Activated CD4-positive, alpha-beta memory T cell treated with anti-CD3 and anti-CD28 coated beads for 36 hours (primary cell): ENCODE measurements at regions of chr21 and their contacts with region 1.

Region 1: GRCh38 chr21:25607151-25608043 is at the start of gene MRPL39:
- DNase-seq: peak; percentile 93
- H3K4me3 Mint-ChIP-seq: peak within 1 kb of the TSS; percentile 97
- H3K27ac Mint-ChIP-seq: peak within 1 kb of the TSS; percentile 91
- H3K4me1 Mint-ChIP-seq: peaks cover 41% of the 10 kb centered on the region
- H3K27me3 Mint-ChIP-seq: no peaks in the 10 kb centered on the region
- total RNA-seq, gene MRPL39: 71.7 to 73.6 TPM

Region 2: DNA sequence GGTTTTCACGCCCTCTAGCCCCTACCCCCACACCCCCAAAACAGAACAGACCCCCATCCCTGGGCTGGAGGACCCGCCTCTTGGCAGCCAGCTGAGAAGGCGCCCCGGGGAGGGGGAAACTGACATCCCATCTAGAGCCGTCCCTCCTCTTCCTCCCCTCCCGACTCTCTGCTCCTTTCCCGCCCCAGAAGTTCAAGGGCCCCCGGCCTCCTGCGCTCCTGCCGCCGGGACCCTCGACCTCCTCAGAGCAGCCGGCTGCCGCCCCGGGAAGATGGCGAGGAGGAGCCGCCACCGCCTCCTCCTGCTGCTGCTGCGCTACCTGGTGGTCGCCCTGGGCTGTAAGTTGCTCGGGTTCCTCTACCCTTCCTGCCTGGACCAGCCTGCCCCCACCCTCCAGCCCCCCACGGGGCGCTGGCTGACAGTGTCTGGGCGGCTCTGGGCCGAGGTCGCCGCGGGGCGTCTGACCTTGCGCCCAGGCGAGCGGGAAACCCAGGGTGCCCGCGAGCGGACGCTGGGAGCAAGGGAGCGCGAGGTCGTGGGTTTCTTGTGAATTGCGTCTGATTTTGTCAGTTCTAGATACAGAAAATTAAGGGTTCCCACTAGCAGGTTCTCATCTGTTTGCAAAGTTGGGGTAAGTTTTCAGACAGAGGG is 32.3 kb after region 1 on chr21:
- CTCF ChIA-PET with region 1: interaction called, 23 read pairs
- POLR2A ChIA-PET with region 1: interaction called, 3 read pairs
- intact Hi-C with region 1: loop called (anchors 1 kb)
- DNase-seq: peak; percentile 58
- H3K4me3 Mint-ChIP-seq: peak overlapping the region; percentile 57
- H3K27ac Mint-ChIP-seq: no peak overlapping the region
- H3K4me1 Mint-ChIP-seq: peaks cover 30% of the 10 kb centered on the region
- H3K27me3 Mint-ChIP-seq: peaks cover 25% of the 10 kb centered on the region

Region 3: DNA sequence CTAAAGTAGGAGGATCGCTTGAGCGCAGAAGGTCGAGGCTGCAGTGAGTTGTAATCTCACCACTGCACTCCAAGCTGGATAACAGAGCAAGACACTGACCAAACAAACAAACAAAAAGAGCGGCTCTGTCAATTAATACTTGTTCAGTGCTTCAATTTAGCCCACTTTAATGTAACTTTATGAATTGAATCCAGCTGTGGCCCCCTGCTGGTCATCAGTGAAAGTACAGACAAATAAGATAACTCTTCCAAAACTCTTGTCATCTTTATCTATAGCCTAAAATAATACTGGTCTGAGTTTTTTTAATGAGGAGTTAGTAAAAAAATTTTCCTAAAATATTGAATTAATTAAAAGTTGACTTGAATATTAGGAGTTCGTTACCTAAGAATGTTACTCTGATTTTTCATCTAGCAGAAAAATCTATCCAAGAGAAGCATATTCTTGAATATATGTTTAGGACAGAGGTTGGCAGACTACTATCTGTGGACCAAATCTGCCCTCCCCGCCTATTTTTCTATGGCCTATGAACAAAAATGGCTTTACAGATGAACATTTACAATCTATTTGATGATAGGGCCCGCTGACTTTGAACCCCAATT is 101.2 kb after region 1 on chr21:
- CTCF ChIA-PET with region 1: interaction called, 78 read pairs
- POLR2A ChIA-PET with region 1: no interaction called
- intact Hi-C with region 1: loop called (anchors 1 kb)
- DNase-seq: peak; percentile 48
- H3K4me3 Mint-ChIP-seq: no peak overlapping the region
- H3K27ac Mint-ChIP-seq: no peak overlapping the region
- H3K4me1 Mint-ChIP-seq: peaks cover 4% of the 10 kb centered on the region
- H3K27me3 Mint-ChIP-seq: no peaks in the 10 kb centered on the region

Region 4: DNA sequence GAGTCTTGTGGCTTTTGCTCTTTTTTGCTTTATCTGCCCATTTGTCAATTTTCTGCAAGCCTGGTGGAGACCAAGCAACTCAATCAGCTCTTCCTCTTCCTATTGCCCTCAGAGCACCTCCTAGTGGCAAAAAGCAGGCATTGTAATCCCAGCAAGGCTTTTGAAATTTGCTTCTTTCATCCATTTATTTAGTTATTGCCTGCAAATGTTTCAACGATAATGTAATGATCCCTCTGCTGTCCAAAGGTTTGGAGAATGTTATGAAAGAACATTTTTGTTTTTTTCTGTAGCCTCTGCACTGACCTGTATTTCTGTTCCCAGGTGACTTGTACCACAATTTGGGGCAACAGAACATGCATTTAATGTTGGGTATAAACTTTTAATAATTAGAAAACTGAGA is 255.2 kb after region 1 on chr21:
- CTCF ChIA-PET with region 1: interaction called, 18 read pairs
- POLR2A ChIA-PET with region 1: no interaction called
- intact Hi-C with region 1: loop called (anchors 1 kb)
- DNase-seq: peak; percentile 36
- H3K4me3 Mint-ChIP-seq: no peak overlapping the region
- H3K27ac Mint-ChIP-seq: no peak overlapping the region
- H3K4me1 Mint-ChIP-seq: no peaks in the 10 kb centered on the region
- H3K27me3 Mint-ChIP-seq: peaks cover 3% of the 10 kb centered on the region

Region 5: GRCh38 chr21:26170471-26171257 is 563.3 kb after region 1 on chr21 and contains the start of gene APP:
- CTCF ChIA-PET with region 1: no interaction called
- POLR2A ChIA-PET with region 1: no interaction called
- intact Hi-C with region 1: loop called (anchors 1 kb)
- DNase-seq: peak; percentile 91
- H3K4me3 Mint-ChIP-seq: peak within 1 kb of the TSS; percentile 88
- H3K27ac Mint-ChIP-seq: peak within 1 kb of the TSS; percentile 44
- H3K4me1 Mint-ChIP-seq: peaks cover 15% of the 10 kb centered on the region
- H3K27me3 Mint-ChIP-seq: peaks cover 2% of the 10 kb centered on the region
- total RNA-seq, gene APP: 46.3 to 47.1 TPM